Activated CD4-positive, alpha-beta T cell treated with anti-CD3 and anti-CD28 coated beads, Interleukin-2, amount 10 ng/mL, durations not matched to agents 24 days and 14 days (primary cell): ENCODE measurements at regions of chr2 and their contacts with region 1.

Region 1: GRCh38 chr2:56183643-56184499 is at the start of gene CCDC85A:
- DNase-seq: peak; percentile 91
- H3K4me3 Mint-ChIP-seq: peak within 1 kb of the TSS; percentile 42
- H3K27ac Mint-ChIP-seq: no peak within 1 kb of the TSS
- H3K4me1 Mint-ChIP-seq: peaks cover 5% of the 10 kb centered on the region
- H3K27me3 Mint-ChIP-seq: peaks cover 50% of the 10 kb centered on the region
- total RNA-seq, gene CCDC85A: not detected in 2 replicates

Region 2: DNA sequence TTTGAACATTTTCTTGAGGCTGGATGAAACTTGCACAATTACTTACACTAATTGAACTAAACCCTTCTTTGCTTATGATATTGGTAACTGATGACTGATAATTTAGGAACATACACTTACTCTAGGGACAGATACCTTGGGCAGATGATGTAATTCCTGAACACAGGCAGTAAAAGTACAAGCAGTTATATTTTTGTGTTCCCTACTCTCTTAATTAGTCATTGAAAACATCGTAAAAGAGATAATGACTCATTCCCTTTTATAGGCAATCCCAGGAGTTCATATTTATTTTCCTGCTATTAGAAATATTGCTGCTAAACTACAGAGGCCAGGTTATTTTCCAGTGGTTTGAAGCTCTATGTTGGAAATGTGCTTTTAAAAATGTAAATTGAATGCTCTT is 46.3 kb after region 1 on chr2:
- intact Hi-C with region 1: no loop called
- DNase-seq: no peak
- H3K4me3 Mint-ChIP-seq: no peak overlapping the region
- H3K27ac Mint-ChIP-seq: no peak overlapping the region
- H3K4me1 Mint-ChIP-seq: no peaks in the 10 kb centered on the region
- H3K27me3 Mint-ChIP-seq: no peaks in the 10 kb centered on the region

Region 3: GRCh38 chr2:56749152-56749752 is 565.4 kb after region 1 on chr2:
- intact Hi-C with region 1: loop called (anchors 5 kb)
- DNase-seq: no peak
- H3K4me3 Mint-ChIP-seq: no peak overlapping the region
- H3K27ac Mint-ChIP-seq: no peak overlapping the region
- H3K4me1 Mint-ChIP-seq: no peaks in the 10 kb centered on the region
- H3K27me3 Mint-ChIP-seq: no peaks in the 10 kb centered on the region

Region 4: GRCh38 chr2:57497489-57498096 is 1313.7 kb after region 1 on chr2:
- intact Hi-C with region 1: loop called (anchors 5 kb)
- DNase-seq: peak; percentile 66
- H3K4me3 Mint-ChIP-seq: no peak overlapping the region
- H3K27ac Mint-ChIP-seq: no peak overlapping the region
- H3K4me1 Mint-ChIP-seq: no peaks in the 10 kb centered on the region
- H3K27me3 Mint-ChIP-seq: no peaks in the 10 kb centered on the region

Region 5: DNA sequence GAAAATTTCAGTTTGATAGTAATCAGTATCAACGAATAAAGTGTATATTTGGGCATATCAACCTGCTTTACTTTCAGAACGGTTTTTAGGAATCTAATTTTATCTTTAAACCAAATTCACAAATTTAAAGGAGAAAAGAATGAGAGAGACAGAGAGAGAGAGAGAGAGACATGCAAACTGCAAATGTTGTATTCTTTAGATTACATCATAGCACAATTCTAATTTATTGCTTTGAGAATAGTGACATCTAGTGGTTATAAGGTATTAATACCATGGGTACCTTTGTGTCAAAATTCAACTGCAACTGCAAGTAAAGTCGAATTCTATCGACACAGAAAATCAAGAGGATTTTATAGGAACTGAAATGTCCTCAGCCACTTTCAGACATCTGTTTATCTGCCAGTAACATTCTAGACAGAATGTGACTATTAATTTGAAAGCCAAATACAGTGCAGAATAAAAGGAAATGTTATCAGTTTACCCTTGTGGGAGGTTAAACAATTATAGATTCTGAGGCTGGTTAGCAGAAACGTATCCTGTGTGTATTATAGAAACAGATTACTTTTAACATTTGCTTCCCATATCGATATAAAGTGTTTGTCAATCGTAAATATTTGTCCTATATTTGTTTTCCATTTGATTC is 1332.9 kb after region 1 on chr2:
- intact Hi-C with region 1: loop called (anchors 2 kb)
- DNase-seq: no peak
- H3K4me3 Mint-ChIP-seq: no peak overlapping the region
- H3K27ac Mint-ChIP-seq: no peak overlapping the region
- H3K4me1 Mint-ChIP-seq: no peaks in the 10 kb centered on the region
- H3K27me3 Mint-ChIP-seq: no peaks in the 10 kb centered on the region